Esophagus muscularis mucosa (tissue), 4 donors: ENCODE measurements at regions of chr16 and their contacts with region 1.

Region 1: GRCh38 chr16:30557957-30558788 is at the start of gene ZNF764:
- DNase-seq: peak; percentile 99
- H3K4me3 ChIP-seq: peak within 1 kb of the TSS; percentile 70 to 89 (median 79)
- H3K27ac ChIP-seq: peak within 1 kb of the TSS; percentile 90 to 97 (median 92)
- H3K4me1 ChIP-seq: peaks cover 9 to 52% (median 43%) of the 10 kb centered on the region in 4 donors
- H3K27me3 ChIP-seq: no peaks in the 10 kb centered on the region
- CTCF ChIP-seq: peak in 1 of 3 experiments; percentile 13
- EP300 ChIP-seq: no peak
- POLR2A ChIP-seq: no peak
- total RNA-seq, gene ZNF764: 8.7 to 14.0 (median 11.3) TPM

Region 2: DNA sequence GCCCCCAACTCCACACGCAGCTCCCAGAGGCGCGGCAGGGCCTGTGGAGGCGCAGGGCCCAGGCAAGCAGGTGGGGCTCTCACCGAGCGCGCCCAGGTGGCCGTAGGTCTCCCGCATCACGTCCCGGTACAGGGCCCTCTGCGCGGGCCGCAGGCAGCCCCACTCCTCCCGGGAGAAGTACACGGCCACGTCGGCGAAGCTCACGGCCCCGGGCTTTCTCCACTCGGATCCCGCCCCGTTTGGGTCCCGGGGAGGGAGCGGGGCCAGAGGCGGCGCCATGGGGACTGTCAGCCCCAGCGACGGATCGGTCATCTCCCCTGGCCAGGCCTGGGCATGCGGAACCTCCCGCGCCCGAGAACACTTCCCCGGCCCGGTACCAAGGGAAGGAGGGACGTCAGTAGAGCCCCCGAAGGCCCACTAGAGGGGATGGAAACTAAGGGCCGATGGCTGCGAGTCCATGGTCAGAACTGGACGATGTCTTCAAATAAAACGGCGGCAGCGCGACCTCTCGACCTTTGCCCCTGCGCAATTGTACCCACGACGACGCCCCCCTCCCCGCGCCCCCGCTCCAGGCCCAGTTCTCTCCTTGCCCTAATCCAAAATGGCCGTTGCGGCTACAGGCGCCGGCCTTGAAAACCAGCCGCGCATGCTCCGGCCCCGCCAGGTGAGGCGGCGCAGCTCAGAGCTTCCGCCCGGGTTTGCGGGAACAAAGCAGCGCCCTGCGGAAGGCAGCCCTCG is 23.6 kb before region 1 on chr16 and contains the start of gene ZNF747:
- intact Hi-C with region 1: loop called (anchors 1 kb)
- DNase-seq: peak; percentile 98
- H3K4me3 ChIP-seq: peak within 1 kb of the TSS; percentile 68 to 74 (median 72)
- H3K27ac ChIP-seq: peak within 1 kb of the TSS; percentile 89 to 94 (median 93)
- H3K4me1 ChIP-seq: peaks cover 33 to 36% (median 34%) of the 10 kb centered on the region in 4 donors
- H3K27me3 ChIP-seq: no peaks in the 10 kb centered on the region
- CTCF ChIP-seq: peak in 1 of 3 experiments; percentile 17
- EP300 ChIP-seq: no peak
- POLR2A ChIP-seq: peak; percentile 47
- total RNA-seq, gene ZNF747: 15.2 to 29.6 (median 22.3) TPM

Region 3: GRCh38 chr16:30633526-30633917 is 75.3 kb after region 1 on chr16:
- intact Hi-C with region 1: loop called (anchors 5 kb)
- DNase-seq: no peak
- H3K4me3 ChIP-seq: peak overlapping the region; percentile 62 to 74 (median 66)
- H3K27ac ChIP-seq: peak overlapping the region; percentile 82 to 91 (median 90)
- H3K4me1 ChIP-seq: peaks cover 6 to 28% (median 23%) of the 10 kb centered on the region in 4 donors
- H3K27me3 ChIP-seq: no peaks in the 10 kb centered on the region
- CTCF ChIP-seq: no peak
- EP300 ChIP-seq: no peak
- POLR2A ChIP-seq: no peak